Heart right ventricle (tissue), 16 donors: ENCODE measurements at regions of chr17 and their contacts with region 1.

Region 1: DNA sequence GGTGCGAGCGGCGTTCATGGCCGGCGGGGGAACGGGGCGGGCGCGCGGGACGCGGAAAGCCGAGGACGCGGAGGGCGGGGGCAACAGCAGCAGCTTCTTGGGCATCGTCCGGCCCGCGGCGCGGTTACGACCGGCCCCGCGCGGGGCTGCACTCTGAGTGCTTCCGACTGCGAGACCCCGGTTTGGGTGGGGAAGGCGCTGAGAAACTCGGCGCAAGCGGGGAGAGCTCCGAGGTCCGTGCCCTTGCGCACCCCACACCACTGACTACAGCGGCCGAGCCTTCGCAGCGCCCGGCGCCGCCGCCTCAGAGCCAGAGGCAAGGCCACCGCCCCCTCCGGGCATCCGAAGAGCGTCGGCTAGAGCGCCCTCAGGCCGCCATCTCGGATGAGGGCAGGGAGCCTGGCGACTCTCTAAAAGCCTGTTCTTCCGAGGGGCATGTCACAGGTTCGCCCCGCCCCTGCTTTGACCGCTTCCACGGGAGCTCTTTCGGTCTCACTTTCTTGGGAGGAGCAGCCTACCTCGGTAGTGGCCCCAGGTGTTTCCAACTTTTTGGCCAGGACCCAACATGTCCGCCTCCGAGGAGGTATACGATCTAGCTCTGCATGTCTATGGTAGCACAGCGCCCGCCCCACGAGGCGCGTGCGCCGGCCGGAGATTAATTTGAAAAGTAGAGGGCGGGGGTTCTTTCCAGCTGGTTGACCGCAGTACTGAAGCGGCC is at the start of gene PRPSAP1:
- DNase-seq: peak; percentile 86 to 89
- ATAC-seq: peak; percentile 97 to 99 (median 99)
- H3K4me3 ChIP-seq: peak within 1 kb of the TSS; percentile 83 to 98 (median 92)
- H3K27ac ChIP-seq: peak within 1 kb of the TSS; percentile 88 to 97 (median 92)
- H3K4me1 ChIP-seq: peaks cover 0 to 28% (median 24%) of the 10 kb centered on the region in 9 donors
- H3K27me3 ChIP-seq: no peaks in the 10 kb centered on the region
- CTCF ChIP-seq: peak; percentile 43 to 76 (median 58)
- total RNA-seq, gene PRPSAP1: 27.6 to 43.7 (median 34.7) TPM

Region 2: DNA sequence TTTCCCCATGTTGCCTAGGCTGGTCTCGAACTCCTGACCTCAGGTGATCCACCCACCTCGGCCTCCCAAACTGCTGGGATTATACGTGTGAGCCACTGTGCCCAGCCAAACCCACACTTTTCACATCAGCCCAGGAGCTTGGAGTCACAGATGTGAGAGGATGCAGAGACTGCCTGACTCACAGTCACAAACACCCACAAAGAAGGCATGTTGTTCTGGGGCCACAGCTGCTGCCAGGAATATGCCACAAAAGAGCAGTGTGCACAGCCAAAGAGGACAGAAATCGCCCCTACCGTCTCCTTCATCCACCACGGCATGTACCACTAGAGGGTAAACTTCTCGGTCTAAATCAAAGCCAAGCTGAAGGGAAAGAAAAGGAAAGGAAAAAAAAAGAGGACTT is 187.6 kb before region 1 on chr17:
- intact Hi-C with region 1: no loop called
- DNase-seq: no peak
- ATAC-seq: no peak
- H3K4me3 ChIP-seq: no peak overlapping the region
- H3K27ac ChIP-seq: no peak overlapping the region
- H3K4me1 ChIP-seq: no peaks in the 10 kb centered on the region
- H3K27me3 ChIP-seq: no peaks in the 10 kb centered on the region
- CTCF ChIP-seq: no peak

Region 3: GRCh38 chr17:76314392-76315227 is 39.1 kb before region 1 on chr17:
- intact Hi-C with region 1: loop called in 4 of 10 experiments (anchors 5 kb)
- DNase-seq: peak in 1 of 2 donors; percentile 31
- ATAC-seq: peak; percentile 47 to 91 (median 82)
- H3K4me3 ChIP-seq: peak overlapping the region in 4 of 10 donors; percentile 14 to 29 (median 25)
- H3K27ac ChIP-seq: peak overlapping the region; percentile 22 to 80 (median 57)
- H3K4me1 ChIP-seq: peaks cover 0 to 18% (median 8%) of the 10 kb centered on the region in 9 donors
- H3K27me3 ChIP-seq: no peaks in the 10 kb centered on the region
- CTCF ChIP-seq: no peak

Region 4: DNA sequence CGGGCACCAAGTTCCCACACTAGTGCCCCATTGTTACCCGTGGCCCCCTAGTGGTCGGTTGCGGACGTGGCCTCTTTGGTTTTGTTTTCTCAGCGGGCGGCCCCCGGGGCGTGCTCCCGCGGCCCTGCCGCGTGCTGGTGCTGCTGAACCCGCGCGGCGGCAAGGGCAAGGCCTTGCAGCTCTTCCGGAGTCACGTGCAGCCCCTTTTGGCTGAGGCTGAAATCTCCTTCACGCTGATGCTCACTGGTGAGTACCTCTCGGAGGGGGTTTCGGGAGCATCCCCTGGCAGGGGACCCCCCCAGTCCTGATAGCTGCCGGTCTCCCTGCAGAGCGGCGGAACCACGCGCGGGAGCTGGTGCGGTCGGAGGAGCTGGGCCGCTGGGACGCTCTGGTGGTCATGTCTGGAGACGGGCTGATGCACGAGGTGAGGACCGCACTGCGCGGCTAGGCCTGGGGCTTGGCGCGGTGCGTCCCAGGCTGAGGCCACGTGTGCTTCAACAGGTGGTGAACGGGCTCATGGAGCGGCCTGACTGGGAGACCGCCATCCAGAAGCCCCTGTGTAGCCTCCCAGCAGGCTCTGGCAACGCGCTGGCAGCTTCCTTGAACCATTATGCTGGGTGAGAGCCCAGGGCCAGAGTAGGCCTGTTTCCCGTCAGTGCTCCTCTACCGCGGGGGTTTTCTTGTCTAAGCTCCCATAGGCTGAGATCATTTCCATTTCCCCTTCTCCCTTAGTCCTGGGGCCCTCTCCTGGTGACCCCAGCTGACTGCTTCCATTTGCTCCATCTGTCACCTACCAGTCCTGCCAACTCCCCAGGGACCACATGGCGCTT is 32.3 kb after region 1 on chr17:
- intact Hi-C with region 1: loop called in 1 of 10 experiments (anchors 5 kb)
- DNase-seq: peak; percentile 83 to 86
- ATAC-seq: peak; percentile 3 to 56 (median 36)
- H3K4me3 ChIP-seq: peak overlapping the region in 9 of 10 donors; percentile 55 to 84 (median 70)
- H3K27ac ChIP-seq: peak overlapping the region in 9 of 10 donors; percentile 39 to 98 (median 85)
- H3K4me1 ChIP-seq: peaks cover 10 to 57% (median 44%) of the 10 kb centered on the region in 9 donors
- H3K27me3 ChIP-seq: peaks cover 0 to 11% (median 0%) of the 10 kb centered on the region in 7 donors
- CTCF ChIP-seq: peak; percentile 81 to 91 (median 86)

Region 5: DNA sequence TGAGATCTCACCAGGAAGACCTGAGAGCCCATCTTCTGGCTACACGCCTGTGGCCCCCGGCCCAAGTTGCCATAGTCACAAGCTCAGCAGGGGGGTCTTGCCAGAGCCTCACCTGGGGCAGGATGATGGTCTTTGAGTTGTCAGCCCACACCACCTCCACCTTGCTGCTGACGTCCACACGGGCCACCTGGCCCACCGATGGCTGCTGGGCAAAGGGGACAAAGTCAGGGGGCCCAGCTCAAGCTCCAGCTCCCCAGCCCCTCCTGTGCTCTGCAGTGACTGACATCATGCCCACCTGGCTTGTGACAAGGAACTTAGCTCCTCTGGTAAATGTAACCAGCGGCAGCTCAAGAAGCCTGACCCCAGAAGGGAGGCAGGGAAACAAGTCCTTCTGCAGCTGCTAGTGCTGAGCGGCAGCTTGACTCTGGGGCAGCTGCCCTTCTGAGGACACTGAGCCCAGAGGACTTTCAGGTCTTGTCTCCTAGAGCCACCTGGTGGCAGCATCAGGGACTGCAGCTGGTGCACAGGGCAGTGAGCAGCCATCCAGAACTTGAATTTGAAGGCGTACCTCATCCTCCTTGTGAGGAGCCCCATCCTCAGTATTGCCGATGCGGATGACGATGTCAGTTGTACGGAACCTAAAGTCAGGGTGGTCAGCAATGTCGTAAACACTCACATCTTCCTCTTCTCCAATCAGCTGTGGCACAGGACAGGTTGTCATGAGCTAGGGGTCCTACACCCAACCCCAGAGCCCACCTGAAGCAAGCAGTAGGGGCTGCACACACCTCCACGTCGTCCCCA is 44.1 kb after region 1 on chr17:
- intact Hi-C with region 1: loop called in 1 of 10 experiments (anchors 5 kb)
- DNase-seq: peak; percentile 87 to 91
- ATAC-seq: peak; percentile 74 to 89 (median 85)
- H3K4me3 ChIP-seq: no peak overlapping the region
- H3K27ac ChIP-seq: peak overlapping the region in 1 of 10 donors; percentile 17
- H3K4me1 ChIP-seq: peaks cover 3 to 16% (median 6%) of the 10 kb centered on the region in 9 donors
- H3K27me3 ChIP-seq: no peaks in the 10 kb centered on the region
- CTCF ChIP-seq: peak; percentile 96 to 99 (median 97)